ENCODE measurements at regions of chr4 and their contacts with region 1.

Region 1: DNA sequence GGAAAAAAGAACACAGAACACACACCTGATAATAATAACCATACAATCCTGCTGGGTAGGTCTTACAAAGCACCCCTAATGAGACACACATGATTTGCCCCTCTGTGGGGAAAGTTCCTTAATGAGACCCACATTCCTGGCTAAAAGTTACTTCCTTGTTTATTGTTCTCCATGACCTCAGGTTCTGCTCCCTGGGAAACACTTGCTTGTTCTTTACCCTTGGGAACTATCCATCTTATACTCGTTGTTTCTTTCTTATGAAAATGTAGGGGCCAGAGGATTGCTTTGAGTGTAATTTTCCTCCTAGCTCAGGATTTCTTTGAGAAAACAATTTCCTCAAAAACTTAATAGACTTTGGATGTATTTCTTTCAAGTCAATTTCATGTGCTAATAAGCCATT is 52.1 kb upstream of the PCDH10 start:
- DNase-seq: no peak

Region 2: DNA sequence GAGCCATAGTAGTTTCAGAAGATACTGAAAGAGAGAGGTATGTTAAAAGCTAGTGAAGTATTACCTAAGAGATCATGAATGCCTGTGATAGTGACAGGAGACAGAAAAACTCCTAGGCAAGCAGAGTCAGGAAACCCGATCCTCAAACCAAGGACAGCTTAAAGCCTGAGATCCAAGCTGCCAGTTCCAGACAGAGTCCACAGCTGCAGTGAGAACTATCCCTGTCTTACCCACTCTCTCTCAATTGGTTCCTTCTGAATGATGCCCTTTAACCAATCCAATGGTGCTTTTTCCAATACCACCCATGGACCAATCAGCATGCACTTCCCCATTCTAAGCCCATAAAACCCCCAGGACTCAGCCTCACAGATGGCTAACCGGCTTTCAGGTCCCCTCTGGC is 38.3 kb before region 1 on chr4:
- intact Hi-C with region 1: loop called (anchors 1 kb)
- DNase-seq: no peak

Measured in posterior cingulate gyrus (tissue), 11 donors.